ENCODE measurements at regions of chr10 and their contacts with region 1.

Region 1: DNA sequence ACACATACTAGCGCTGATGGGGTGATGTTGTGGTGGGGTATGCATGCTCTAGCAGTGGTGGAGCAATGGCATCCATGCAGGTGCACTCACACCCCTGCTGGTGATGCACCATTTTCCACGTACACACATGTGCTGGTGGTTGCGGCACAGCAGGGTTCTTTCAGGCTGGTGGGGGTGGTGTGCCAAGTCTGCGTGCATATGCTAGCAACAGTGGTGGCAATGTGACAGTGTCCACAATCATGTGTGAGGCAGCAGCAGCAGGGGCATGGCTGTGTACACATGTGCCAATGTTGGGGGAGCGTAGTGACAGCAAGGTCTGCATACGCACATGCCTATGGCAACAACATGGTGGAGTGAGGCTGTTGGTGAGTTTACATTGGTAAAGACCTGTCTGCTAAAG is 148.1 kb downstream of the ZWINT start:
- DNase-seq: no peak
- H3K4me3 ChIP-seq: no peak overlapping the region
- H3K27ac ChIP-seq: no peak overlapping the region
- H3K4me1 ChIP-seq: no peaks in the 10 kb centered on the region
- H3K27me3 ChIP-seq: no peaks in the 10 kb centered on the region
- CTCF ChIP-seq: no peak
- POLR2A ChIP-seq: no peak

Region 2: DNA sequence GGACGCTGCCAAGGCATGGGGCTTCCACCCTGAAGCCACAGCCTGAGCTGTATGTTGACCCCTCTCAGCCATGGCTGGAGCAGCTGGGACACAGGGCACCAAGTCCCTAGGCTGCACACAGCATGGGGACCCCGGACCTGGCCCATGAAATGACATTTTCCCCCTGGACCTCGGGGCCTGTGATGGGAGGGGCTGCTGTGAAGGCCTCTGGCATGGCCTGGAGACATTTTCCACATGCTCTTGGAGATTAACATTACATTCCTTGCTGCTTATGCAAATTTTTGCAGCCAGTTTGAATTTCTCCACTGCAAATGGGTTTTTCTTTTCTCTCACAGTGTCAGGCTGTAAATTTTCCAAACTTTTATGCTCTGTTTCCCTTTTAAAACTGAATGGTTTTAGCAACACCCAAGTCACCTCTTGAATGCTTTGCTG is 315.4 kb before region 1 on chr10:
- intact Hi-C with region 1: no loop called
- DNase-seq: no peak
- H3K4me3 ChIP-seq: no peak overlapping the region
- H3K27ac ChIP-seq: no peak overlapping the region
- H3K4me1 ChIP-seq: no peaks in the 10 kb centered on the region
- H3K27me3 ChIP-seq: no peaks in the 10 kb centered on the region
- CTCF ChIP-seq: no peak
- POLR2A ChIP-seq: no peak

Region 3: DNA sequence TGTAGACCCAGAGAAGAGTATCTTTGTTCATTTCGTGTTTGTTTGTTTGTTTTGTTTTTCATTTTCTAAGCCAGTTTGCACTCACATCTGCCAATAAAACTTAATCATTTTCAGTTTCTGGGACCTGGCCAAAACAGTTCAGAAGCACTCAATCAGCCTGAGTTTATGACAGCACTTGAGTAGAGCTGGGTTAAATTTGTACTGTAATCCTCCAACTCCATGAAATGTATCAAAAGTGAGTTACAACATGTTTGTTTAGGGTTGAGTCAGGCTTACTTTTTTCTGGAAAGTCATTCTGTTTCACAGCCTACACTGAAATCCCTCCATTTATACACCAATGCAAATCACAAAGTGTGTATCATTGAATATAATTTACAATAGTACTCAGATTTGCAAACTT is 56.2 kb after region 1 on chr10:
- intact Hi-C with region 1: loop called (anchors 10 kb)
- DNase-seq: no peak
- H3K4me3 ChIP-seq: no peak overlapping the region
- H3K27ac ChIP-seq: no peak overlapping the region
- H3K4me1 ChIP-seq: no peaks in the 10 kb centered on the region
- H3K27me3 ChIP-seq: no peaks in the 10 kb centered on the region
- CTCF ChIP-seq: no peak
- POLR2A ChIP-seq: no peak